ENCODE measurements at regions of chr17 and their contacts with region 1.

Region 1: DNA sequence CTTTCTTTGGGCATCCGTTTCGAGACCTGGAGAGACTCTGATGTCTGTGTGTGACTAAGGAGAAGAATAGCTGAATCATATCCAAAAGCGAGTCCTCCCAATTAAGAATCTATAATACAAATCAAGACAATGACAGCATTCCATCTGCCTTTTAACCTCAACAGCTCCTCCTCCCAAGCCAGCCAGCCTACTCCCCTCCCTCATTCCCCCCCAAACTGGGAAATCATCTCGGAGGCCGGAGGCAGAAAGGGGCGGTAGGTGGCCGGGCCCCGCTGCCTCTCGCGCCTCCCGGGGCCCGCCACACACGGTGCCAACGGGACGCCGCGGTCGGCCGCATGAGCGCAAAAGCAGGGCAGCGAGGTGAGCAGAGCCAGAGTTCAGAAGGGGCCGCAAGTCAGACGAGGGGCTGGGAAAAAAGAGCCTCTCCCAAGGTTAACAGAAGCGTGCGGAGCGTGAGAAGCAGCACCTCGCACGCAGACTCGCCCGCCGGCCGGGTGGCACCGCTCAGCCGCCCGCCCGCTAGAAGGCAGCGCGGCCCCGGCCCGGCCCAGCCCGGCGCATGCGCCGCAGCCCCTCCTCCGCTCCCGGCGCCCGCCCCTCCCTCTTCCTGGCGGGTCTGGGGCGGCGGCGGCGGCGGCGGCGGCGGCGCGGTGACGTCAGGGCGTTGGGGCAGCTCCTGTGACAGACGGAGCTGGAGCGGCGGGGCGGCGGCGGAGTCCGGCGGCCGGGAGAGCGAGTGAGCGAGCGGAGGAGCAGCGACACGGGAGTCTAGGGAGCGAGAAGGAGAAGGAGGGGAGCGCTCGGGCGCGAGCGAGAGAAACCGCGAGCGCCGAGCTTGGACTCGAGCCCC is at the start of gene PAFAH1B1:
- DNase-seq: peak; percentile 99
- ATAC-seq: peak; percentile 82
- H3K4me3 Mint-ChIP-seq: peak within 1 kb of the TSS; percentile 95
- H3K27ac Mint-ChIP-seq: peak within 1 kb of the TSS; percentile 92
- H3K4me1 Mint-ChIP-seq: peaks cover 21% of the 10 kb centered on the region
- H3K27me3 Mint-ChIP-seq: peaks cover 3% of the 10 kb centered on the region
- total RNA-seq, gene PAFAH1B1: 151 to 171 TPM

Region 2: DNA sequence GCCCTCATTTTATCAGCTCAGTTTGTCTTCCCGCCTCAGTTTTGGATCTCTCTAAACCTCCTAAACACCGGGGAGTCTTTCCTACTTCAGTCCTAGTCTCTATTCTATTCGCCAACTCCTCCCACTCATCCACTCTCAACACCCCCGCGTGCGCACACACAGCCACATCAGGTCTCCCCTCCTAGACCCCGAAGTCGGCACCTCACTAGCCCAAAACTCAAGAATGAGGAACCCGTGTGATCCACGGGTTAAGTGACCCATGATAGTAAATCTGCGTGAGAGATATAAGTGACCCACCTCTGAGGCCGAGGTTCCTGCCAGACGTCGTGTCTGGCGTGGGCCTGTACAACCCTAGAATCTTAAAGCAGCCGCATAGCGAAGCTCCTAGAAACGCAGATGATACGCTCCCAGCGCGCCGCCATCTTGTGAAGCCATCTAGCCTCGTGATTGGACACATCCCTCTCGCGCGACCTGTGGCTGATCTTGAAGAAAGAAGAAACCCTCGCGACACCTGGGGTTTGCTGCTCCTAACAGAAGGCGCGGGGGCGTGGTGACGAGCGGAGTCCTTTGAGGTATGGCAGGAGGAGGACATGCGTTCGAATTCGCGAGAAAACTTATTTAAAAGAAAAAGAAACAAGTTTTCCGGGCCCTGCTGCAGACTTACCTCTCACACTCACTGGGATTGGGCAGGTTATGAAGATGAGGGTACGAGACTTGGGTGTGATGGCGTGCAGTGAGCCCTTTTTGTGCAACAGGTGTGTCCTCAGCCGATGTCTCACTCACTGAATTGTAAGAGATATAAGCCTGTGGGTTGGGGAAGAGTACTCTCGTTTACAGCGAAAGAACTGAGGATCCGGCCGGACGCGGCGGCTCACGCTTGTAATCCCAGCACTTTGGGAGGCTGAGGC is 81.5 kb before region 1 on chr17 and contains the start of gene METTL16:
- POLR2A ChIA-PET with region 1: interaction called, 16 read pairs
- DNase-seq: peak; percentile 93
- ATAC-seq: peak; percentile 99
- H3K4me3 Mint-ChIP-seq: no peak within 1 kb of the TSS
- H3K27ac Mint-ChIP-seq: no peak within 1 kb of the TSS
- H3K4me1 Mint-ChIP-seq: peaks cover 21% of the 10 kb centered on the region
- H3K27me3 Mint-ChIP-seq: no peaks in the 10 kb centered on the region
- total RNA-seq, gene METTL16: 32.2 to 36.6 TPM